ENCODE measurements at regions of chr11 and their contacts with region 1.

Region 1: GRCh38 chr11:119323538-119324033 is 6.7 kb upstream of the MCAM start:
- DNase-seq: peak; percentile 90
- ATAC-seq: peak; percentile 21
- H3K4me3 Mint-ChIP-seq: no peak overlapping the region
- H3K27ac Mint-ChIP-seq: no peak overlapping the region
- H3K4me1 Mint-ChIP-seq: peaks cover 20% of the 10 kb centered on the region
- H3K27me3 Mint-ChIP-seq: peaks cover 3% of the 10 kb centered on the region

Region 2: DNA sequence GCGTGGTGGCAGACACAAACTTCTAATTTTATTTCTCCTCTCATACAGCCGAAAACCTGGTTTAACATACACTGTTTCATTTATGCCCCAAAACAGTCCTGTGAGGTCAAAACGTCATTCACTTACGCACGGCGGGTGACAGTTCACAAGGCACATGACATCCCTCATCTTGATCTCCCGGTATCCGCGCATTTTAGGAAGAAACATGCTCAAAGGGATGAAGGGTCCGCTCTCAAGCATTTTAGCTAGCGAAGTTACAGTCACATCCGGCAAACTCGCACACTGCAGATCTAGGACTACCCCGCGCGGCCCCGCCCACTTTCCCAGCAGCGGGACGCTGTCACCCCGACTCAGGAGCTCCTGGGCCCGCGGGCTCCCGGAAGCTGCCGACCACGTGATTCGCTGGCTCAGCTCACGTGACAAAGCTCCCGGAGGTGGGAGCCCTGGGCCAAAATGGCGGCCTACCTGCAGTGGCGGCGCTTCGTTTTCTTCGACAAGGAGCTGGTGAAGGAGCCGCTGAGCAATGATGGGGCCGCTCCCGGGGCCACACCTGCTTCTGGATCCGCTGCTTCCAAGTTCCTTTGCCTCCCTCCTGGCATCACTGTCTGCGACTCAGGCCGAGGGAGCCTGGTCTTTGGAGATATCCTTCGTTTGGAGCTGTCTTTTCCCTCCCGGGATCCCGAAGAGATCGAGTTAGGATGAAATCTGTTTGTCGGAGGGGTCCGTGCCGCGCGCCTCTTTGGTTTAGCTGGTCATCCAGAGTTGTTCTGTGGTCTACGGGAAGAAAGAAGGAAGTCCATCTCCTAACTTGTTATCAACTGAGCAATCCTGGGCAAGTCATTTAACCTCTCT is 256.0 kb before region 1 on chr11 and contains the start of gene VPS11:
- CTCF ChIA-PET with region 1: interaction called, 3 read pairs
- POLR2A ChIA-PET with region 1: no interaction called
- intact Hi-C with region 1: loop called in 1 of 2 experiments (anchors 1 kb)
- DNase-seq: peak; percentile 100
- ATAC-seq: peak; percentile 98
- H3K4me3 Mint-ChIP-seq: peak within 1 kb of the TSS; percentile 87
- H3K27ac Mint-ChIP-seq: peak within 1 kb of the TSS; percentile 98
- H3K4me1 Mint-ChIP-seq: peaks cover 34% of the 10 kb centered on the region
- H3K27me3 Mint-ChIP-seq: no peaks in the 10 kb centered on the region
- total RNA-seq, gene VPS11: 20.5 to 25.4 TPM

Region 3: GRCh38 chr11:119205574-119206510 is 117.7 kb before region 1 on chr11 and contains the start of gene CBL:
- CTCF ChIA-PET with region 1: interaction called, 24 read pairs
- POLR2A ChIA-PET with region 1: no interaction called
- intact Hi-C with region 1: loop called (anchors 1 to 5 kb)
- DNase-seq: peak; percentile 99
- ATAC-seq: peak; percentile 85
- H3K4me3 Mint-ChIP-seq: peak within 1 kb of the TSS; percentile 98
- H3K27ac Mint-ChIP-seq: peak within 1 kb of the TSS; percentile 94
- H3K4me1 Mint-ChIP-seq: peaks cover 27% of the 10 kb centered on the region
- H3K27me3 Mint-ChIP-seq: no peaks in the 10 kb centered on the region
- total RNA-seq, gene CBL: 29.3 to 33.2 TPM

Region 4: GRCh38 chr11:119306373-119306890 is 17.2 kb before region 1 on chr11:
- CTCF ChIA-PET with region 1: interaction called, 20 read pairs
- POLR2A ChIA-PET with region 1: interaction called, 4 read pairs
- intact Hi-C with region 1: no loop called
- DNase-seq: peak; percentile 66
- ATAC-seq: peak; percentile 95
- H3K4me3 Mint-ChIP-seq: peak overlapping the region; percentile 42
- H3K27ac Mint-ChIP-seq: peak overlapping the region; percentile 95
- H3K4me1 Mint-ChIP-seq: peaks cover 27% of the 10 kb centered on the region
- H3K27me3 Mint-ChIP-seq: no peaks in the 10 kb centered on the region

Region 5: GRCh38 chr11:119356349-119357031 is 32.9 kb after region 1 on chr11:
- CTCF ChIA-PET with region 1: interaction called, 17 read pairs
- POLR2A ChIA-PET with region 1: no interaction called
- intact Hi-C with region 1: no loop called
- DNase-seq: peak; percentile 89
- ATAC-seq: peak; percentile 80
- H3K4me3 Mint-ChIP-seq: peak overlapping the region; percentile 70
- H3K27ac Mint-ChIP-seq: peak overlapping the region; percentile 70
- H3K4me1 Mint-ChIP-seq: peaks cover 17% of the 10 kb centered on the region
- H3K27me3 Mint-ChIP-seq: peaks cover 29% of the 10 kb centered on the region

Region 6: GRCh38 chr11:119741369-119742262 is 418.0 kb after region 1 on chr11:
- CTCF ChIA-PET with region 1: no interaction called
- POLR2A ChIA-PET with region 1: no interaction called
- intact Hi-C with region 1: no loop called
- DNase-seq: peak; percentile 79
- ATAC-seq: peak; percentile 83
- H3K4me3 Mint-ChIP-seq: no peak overlapping the region
- H3K27ac Mint-ChIP-seq: no peak overlapping the region
- H3K4me1 Mint-ChIP-seq: peaks cover 10% of the 10 kb centered on the region
- H3K27me3 Mint-ChIP-seq: peaks cover 39% of the 10 kb centered on the region